A549 (cell line): ENCODE measurements at regions of chr7 and their contacts with region 1.

Region 1: DNA sequence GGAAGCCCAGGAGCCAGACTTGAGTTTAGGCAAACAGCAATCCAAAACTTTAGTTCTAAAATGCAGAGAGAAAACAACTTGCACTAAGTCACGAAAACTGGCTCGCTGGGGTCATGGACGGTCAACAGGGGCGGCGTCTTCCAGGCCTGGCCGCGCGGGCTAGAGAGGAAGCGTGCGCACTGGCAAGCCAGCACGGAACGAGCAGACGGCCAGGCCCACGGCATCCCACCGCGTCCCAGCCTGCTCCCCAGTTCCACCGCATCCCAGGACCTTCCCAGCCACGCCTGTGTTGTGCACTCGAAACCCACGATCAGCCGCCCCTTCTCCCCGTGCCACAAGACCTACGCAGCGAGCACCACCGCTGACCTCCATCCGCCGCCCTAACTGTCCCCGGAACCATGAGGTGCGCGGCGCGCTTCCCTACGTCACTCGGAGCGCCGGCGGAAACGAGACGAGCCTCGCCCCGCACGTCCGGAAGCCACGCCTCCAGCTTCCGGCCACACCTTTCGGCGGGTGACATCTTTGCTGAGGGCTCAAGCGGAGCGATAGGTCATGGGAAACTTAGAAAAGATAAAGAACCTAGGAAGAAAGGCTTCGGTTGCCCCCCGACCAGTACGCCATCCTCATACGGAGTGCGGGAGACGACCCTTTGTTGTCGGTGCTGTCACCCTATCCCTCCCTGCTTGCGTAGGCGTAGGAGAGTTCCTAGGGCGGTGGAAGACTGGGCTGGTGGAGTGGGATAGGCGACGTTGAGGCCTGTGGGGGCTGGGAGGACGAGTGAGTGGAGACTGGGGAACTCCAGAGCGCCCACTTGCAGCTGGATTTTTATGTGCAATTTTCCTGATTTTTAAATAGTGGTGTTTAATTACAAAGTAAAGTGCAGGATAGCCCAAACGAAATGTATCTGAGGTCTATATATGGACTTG is at the start of gene TBRG4:
- DNase-seq: peak; percentile 85 to 97
- ATAC-seq: peak; percentile 94 to 96
- H3K4me3 ChIP-seq: peak within 1 kb of the TSS; percentile 86
- H3K27ac ChIP-seq: peak within 1 kb of the TSS; percentile 92 to 96
- H3K4me1 ChIP-seq: peaks cover 28% of the 10 kb centered on the region
- CTCF ChIP-seq: peak; percentile 61
- EP300 ChIP-seq: no peak
- POLR2A ChIP-seq: peak; percentile 94
- RAD21 ChIP-seq: peak in 1 of 2 experiments; percentile 23; a peak in 3 of 5 replicates
- polyA plus RNA-seq, gene TBRG4: 100 and 135 TPM in 2 replicates

Region 2: GRCh38 chr7:44581879-44582603 is 529.5 kb before region 1 on chr7 and contains the start of gene TMED4:
- CTCF ChIA-PET with region 1: no interaction called
- POLR2A ChIA-PET with region 1: interaction called, 14 read pairs
- DNase-seq: peak; percentile 98 to 99
- ATAC-seq: peak; percentile 94
- H3K4me3 ChIP-seq: peak within 1 kb of the TSS; percentile 94
- H3K27ac ChIP-seq: peak within 1 kb of the TSS; percentile 94 to 95
- H3K4me1 ChIP-seq: peaks cover 16% of the 10 kb centered on the region
- CTCF ChIP-seq: no peak
- EP300 ChIP-seq: no peak
- POLR2A ChIP-seq: peak; percentile 93
- RAD21 ChIP-seq: no peak
- polyA plus RNA-seq, gene TMED4: 68.3 and 79.2 TPM in 2 replicates